Common myeloid progenitor, CD34-positive (primary cell): ENCODE measurements at regions of chr4 and their contacts with region 1.

Region 1: DNA sequence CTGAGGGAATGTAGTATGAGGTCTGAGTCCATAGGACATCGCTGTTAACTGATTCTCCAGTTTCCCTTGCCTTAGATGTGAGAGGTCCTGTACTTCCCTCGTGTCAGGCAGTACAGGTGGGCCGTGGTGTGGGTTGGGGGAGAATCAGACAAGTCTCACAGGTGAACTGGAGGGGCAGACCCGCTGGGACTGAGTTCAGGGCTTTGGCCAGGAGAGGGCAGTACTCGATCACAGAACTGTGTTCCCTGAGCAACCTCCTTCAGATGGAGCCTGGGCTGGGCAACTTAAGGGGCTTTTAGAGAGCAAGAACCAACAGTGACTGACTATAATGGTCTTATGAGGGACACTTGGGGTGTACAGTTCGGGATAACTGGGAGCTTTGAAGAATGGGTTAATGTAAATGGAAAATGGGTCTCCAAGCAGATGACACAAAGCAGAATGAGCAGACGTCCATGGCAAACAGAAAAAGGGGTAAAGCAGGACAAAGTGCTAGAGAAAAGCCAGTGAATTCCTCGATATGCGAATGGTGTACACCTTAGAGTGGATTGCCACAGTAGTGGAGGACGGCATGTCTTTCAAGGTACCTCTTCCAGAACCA is 83.6 kb downstream of the CCNG2 start:
- DNase-seq: peak; percentile 44 to 77 (median 70)
- H3K4me3 ChIP-seq: no peak overlapping the region
- H3K27ac ChIP-seq: no peak overlapping the region
- H3K4me1 ChIP-seq: no peaks in the 10 kb centered on the region
- H3K27me3 ChIP-seq: peaks cover 0 to 10% (median 0%) of the 10 kb centered on the region in 5 experiments

Region 2: GRCh38 chr4:77174426-77174825 is 66.1 kb before region 1 on chr4:
- CTCF ChIA-PET with region 1: no interaction called
- POLR2A ChIA-PET with region 1: no interaction called
- DNase-seq: peak; percentile 15 to 46 (median 35)
- H3K4me3 ChIP-seq: no peak overlapping the region
- H3K27ac ChIP-seq: no peak overlapping the region
- H3K4me1 ChIP-seq: peaks cover 0 to 3% (median 0%) of the 10 kb centered on the region in 4 experiments
- H3K27me3 ChIP-seq: no peaks in the 10 kb centered on the region

Region 3: GRCh38 chr4:77226939-77227705 is 13.4 kb before region 1 on chr4:
- CTCF ChIA-PET with region 1: interaction called, 16 read pairs
- POLR2A ChIA-PET with region 1: no interaction called
- DNase-seq: no peak
- H3K4me3 ChIP-seq: no peak overlapping the region
- H3K27ac ChIP-seq: no peak overlapping the region
- H3K4me1 ChIP-seq: no peaks in the 10 kb centered on the region
- H3K27me3 ChIP-seq: peaks cover 0 to 3% (median 0%) of the 10 kb centered on the region in 5 experiments

Region 4: GRCh38 chr4:77308843-77309242 is 68.3 kb after region 1 on chr4:
- CTCF ChIA-PET with region 1: interaction called, 13 read pairs
- POLR2A ChIA-PET with region 1: no interaction called
- DNase-seq: peak; percentile 9 to 58 (median 41)
- H3K4me3 ChIP-seq: no peak overlapping the region
- H3K27ac ChIP-seq: no peak overlapping the region
- H3K4me1 ChIP-seq: no peaks in the 10 kb centered on the region
- H3K27me3 ChIP-seq: peaks cover 0 to 1% (median 0%) of the 10 kb centered on the region in 5 experiments

Region 5: GRCh38 chr4:77358315-77358928 is 117.9 kb after region 1 on chr4:
- CTCF ChIA-PET with region 1: interaction called, 39 read pairs
- POLR2A ChIA-PET with region 1: no interaction called
- DNase-seq: peak; percentile 25 to 51 (median 29)
- H3K4me3 ChIP-seq: no peak overlapping the region
- H3K27ac ChIP-seq: no peak overlapping the region
- H3K4me1 ChIP-seq: no peaks in the 10 kb centered on the region
- H3K27me3 ChIP-seq: peaks cover 0 to 7% (median 0%) of the 10 kb centered on the region in 5 experiments